ENCODE measurements at regions of chr11 and their contacts with region 1.

Region 1: DNA sequence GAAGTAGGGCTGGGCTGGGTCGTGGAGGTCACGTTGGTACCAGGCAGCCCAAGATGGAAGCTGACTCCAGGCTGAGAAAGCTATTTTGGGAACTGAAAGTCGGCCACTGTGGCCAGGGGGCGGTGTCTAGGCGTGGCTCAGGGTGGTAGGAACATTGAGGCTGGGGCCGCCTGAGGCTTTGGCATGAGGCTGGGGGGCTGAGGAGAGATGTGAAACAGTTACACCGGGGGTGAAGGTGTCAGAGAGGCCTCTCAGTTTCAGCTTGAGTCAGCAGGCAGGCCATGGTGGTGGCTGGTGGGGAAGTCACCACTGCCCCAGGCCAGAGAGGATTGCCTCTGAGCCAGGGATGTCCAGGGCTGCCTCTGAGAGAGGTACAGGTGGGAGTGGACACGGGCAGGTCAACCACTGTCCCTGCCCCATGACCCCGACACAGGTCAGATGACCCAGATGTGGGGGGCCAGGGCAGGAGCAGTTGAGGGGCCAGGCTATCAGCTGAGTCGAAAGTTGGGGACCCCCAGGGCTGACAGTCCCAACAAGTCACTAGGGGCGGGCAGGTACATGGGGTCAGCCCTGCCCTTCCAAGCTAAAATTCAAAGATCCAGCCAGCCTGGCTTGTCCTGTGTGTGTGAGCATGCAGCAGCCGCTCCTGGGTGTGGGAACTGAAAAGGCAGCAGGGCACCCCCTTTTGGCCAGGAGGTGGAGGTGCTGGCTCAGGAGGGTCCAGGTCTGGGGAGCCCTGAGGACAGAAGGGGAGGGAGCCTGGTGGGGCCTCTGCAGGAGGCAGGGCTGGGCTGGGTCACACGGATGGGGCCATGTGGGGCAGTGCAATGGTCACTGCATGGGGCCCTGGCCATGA is 7.2 kb downstream of the KCNK7 start:
- DNase-seq: peak; percentile 67
- H3K4me3 Mint-ChIP-seq: peak overlapping the region; percentile 66
- H3K27ac Mint-ChIP-seq: peak overlapping the region; percentile 94
- H3K4me1 Mint-ChIP-seq: peaks cover 31% of the 10 kb centered on the region
- H3K27me3 Mint-ChIP-seq: no peaks in the 10 kb centered on the region

Region 2: DNA sequence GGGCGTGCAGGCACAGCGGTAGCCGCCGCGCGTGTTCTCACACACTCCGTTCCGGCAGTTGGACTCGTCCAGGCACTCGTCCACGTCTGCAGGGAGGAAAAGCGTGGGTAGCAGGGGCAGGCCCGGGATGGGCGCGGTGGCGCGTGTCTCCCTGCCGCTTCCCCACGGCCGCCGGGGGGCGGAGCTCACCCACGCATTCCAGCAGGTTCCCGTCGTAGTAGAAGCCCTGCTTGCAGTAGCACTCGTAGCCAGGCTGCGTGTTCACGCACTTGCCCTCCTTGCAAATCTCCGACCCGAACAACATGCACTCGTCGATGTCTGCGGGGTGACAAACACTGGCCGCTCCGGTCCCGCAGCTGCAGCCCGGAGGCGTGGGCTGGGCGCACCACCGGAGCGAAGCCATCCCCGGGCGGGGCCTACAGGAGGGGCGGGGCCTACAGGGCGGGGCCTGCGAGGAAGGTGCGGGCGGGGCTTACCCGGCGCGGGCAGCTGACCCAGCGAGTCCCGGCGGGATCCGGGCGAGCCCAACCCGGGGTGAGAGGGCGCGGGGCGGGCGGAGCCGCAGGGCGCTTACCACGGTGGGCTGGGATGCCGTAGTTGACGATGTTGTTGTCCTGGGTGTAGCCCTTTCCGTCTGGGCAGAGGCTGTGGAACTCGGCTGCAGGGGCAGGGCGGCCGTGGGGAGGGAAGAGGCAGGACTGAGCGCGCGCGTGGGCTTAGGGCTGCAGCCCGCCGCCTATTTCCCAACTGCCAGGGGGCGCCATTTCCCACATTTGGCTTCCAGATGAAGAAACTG is 47.9 kb before region 1 on chr11:
- intact Hi-C with region 1: loop called (anchors 1 kb)
- DNase-seq: peak; percentile 86
- H3K4me3 Mint-ChIP-seq: peak overlapping the region; percentile 85
- H3K27ac Mint-ChIP-seq: peak overlapping the region; percentile 88
- H3K4me1 Mint-ChIP-seq: peaks cover 28% of the 10 kb centered on the region
- H3K27me3 Mint-ChIP-seq: no peaks in the 10 kb centered on the region

Region 3: DNA sequence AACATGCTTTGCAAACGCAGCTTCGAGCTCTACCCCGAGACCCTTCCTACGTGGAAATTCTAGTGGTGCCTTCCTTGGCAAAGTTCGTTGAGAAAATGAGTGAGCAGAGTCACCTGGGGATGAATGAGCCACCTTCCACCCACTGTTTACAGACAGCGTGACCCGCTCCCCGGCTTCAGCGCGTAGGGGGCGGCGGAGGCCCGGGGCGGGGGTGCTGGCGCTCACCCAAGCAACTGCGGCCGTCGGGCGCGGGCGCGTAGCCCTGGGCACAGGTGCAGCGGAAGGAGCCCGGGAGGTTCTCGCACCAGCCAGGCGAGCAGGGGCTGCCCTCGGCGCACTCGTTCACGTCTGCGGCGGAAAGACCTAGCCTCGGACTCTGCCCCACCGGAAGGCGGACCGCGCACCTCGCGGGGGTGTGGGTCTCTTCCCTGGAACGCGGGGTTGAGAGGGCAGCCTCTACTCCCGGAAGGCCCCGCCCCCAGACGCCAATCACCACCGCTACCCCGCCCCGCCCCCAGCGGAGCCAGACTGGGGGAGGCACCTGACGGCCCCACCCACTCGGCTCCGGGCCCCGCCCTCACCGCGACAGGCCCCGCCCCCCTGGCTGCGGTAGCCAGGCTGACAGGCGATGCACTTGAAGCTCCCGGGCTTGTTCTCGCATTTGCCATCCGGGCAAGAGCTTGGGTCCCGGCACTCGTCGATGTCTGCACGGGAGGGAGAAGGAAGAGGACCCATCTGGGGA is 42.0 kb before region 1 on chr11:
- intact Hi-C with region 1: loop called (anchors 1 kb)
- DNase-seq: peak; percentile 96
- H3K4me3 Mint-ChIP-seq: peak overlapping the region; percentile 76
- H3K27ac Mint-ChIP-seq: peak overlapping the region; percentile 79
- H3K4me1 Mint-ChIP-seq: peaks cover 44% of the 10 kb centered on the region
- H3K27me3 Mint-ChIP-seq: no peaks in the 10 kb centered on the region

Region 4: DNA sequence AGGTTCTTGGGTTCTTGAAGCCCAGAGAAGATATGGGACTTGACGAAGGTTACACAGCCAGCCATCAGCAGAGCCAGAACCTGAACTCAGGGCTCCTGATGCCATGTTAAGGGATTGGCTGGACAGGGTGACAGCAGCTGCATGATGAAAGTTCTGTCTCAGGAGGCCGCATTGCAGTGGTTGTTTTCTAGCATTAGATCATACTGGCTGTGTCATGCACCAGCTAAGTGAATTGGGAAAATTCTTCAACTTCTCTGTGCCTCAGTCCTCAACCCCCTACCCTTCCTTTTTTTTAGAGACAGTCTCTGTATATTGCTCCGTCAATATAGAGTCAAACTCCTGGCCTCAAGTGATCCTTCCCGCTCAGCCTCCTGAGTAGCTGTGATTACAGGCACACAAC is 24.8 kb before region 1 on chr11:
- intact Hi-C with region 1: no loop called
- DNase-seq: no peak
- H3K4me3 Mint-ChIP-seq: no peak overlapping the region
- H3K27ac Mint-ChIP-seq: no peak overlapping the region
- H3K4me1 Mint-ChIP-seq: peaks cover 57% of the 10 kb centered on the region
- H3K27me3 Mint-ChIP-seq: no peaks in the 10 kb centered on the region

Region 5: DNA sequence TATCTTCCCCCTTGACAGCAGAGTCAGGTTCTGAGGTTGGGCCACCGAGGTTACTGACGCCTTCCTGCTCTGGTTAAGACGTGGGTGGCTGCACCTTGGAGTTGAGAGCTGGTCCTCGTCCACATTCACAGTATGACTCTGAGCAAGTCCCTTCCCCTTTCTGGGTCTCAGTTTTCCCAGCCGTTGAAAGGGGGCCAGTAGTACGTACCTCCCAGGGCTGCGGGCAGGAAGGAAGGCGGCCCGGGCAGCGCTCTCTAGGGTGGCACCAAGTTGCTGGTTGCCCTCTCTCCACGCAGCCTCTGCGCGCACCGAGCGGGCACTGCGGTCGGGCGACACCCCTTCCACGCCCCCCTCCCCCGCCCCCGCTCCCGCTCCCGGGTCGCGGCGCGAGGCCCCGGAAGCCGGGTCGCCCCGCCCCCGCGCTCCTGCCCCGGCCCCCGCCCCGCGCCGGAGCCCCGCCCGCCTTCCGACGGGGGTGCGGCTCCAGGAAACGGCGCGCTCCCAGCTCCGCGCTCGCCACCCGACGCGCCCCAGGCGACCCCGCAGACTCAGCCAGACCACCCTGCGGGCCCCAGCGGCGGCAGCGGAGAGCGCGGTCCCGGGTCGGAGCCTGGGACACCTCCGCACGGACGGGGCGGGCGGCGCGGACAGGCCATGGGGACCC is 12.7 kb before region 1 on chr11 and contains the start of gene EHBP1L1:
- intact Hi-C with region 1: loop called (anchors 1 kb)
- DNase-seq: peak; percentile 76
- H3K4me3 Mint-ChIP-seq: peak within 1 kb of the TSS; percentile 92
- H3K27ac Mint-ChIP-seq: peak within 1 kb of the TSS; percentile 88
- H3K4me1 Mint-ChIP-seq: peaks cover 48% of the 10 kb centered on the region
- H3K27me3 Mint-ChIP-seq: no peaks in the 10 kb centered on the region
- total RNA-seq, gene EHBP1L1: 168 and 178 TPM in 2 replicates

Region 6: DNA sequence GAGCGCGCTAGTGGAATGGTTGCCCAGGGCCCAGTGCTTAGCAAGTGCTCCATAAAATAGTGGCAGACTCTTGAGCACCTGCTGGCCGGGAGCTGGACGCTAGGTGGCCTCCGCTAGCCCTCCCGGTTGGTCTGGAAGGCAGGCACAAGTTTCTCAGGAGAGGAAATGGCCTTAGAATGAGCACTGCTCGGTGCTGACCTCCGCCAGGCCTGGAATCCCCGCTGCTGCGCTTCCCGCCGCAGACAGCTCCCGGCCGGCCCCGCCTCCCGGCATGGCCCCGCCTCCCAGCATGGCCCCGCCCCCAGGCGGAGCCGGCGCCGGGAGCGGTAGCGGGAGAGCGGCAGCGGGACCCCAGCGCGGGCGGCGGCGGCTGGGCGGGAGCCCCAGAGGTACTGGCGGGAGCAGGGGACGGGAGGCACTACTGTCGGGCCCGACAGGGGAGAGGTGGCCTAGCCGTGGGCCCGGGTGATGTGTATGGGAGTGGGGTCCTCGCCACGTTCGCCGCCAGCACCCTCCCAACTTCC is 49.4 kb after region 1 on chr11 and contains the start of gene SIPA1:
- intact Hi-C with region 1: no loop called
- DNase-seq: peak; percentile 74
- H3K4me3 Mint-ChIP-seq: peak within 1 kb of the TSS; percentile 82
- H3K27ac Mint-ChIP-seq: peak within 1 kb of the TSS; percentile 83
- H3K4me1 Mint-ChIP-seq: peaks cover 40% of the 10 kb centered on the region
- H3K27me3 Mint-ChIP-seq: no peaks in the 10 kb centered on the region
- total RNA-seq, gene SIPA1: 117 and 130 TPM in 2 replicates

Region 7: DNA sequence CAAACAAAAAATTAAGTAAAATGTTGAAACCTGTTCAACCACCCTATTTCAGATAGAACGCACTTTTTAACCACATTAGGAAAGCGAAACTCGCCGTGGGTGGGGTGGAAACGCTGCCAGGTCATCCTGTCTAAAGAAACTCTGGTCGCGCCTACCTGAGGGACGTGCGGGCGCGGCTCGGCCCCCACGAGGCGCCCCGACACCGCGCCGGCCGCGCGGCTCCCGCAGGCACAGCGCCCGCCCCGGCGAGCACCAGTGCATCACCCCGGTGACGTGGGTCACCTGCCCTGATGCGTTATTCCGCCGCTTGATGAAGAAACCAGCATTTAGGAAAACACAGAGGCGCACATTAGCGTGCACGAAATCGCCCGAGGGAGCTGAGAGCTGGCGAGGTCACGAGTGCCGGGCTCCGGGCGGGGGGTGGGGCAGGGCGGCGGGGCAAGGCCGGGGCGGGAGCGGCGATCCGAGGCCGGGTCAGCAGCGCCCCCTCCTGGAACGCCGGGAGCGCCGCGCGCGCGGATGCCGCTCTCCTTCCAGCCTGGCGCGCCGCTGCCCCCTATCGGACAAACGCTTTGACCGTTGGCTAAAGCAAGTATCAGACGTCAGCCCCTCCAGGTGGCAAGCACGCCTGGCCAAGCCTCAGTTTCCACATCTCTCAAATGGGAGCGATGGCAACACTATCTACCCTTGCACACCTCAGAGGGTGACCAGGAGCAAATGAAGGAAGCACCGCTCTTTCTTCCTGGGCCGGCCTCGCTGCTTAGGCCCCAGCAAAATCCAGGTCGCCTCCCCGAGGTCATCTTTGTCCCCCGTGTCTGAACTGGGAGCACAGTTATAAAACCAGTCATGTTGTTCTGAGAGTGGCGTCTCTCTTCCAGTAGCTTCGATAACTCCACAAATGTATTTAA is 229.7 kb after region 1 on chr11:
- intact Hi-C with region 1: no loop called
- DNase-seq: peak; percentile 90
- H3K4me3 Mint-ChIP-seq: peak overlapping the region; percentile 82
- H3K27ac Mint-ChIP-seq: peak overlapping the region; percentile 82
- H3K4me1 Mint-ChIP-seq: peaks cover 19% of the 10 kb centered on the region
- H3K27me3 Mint-ChIP-seq: peaks cover 9% of the 10 kb centered on the region

Region 8: DNA sequence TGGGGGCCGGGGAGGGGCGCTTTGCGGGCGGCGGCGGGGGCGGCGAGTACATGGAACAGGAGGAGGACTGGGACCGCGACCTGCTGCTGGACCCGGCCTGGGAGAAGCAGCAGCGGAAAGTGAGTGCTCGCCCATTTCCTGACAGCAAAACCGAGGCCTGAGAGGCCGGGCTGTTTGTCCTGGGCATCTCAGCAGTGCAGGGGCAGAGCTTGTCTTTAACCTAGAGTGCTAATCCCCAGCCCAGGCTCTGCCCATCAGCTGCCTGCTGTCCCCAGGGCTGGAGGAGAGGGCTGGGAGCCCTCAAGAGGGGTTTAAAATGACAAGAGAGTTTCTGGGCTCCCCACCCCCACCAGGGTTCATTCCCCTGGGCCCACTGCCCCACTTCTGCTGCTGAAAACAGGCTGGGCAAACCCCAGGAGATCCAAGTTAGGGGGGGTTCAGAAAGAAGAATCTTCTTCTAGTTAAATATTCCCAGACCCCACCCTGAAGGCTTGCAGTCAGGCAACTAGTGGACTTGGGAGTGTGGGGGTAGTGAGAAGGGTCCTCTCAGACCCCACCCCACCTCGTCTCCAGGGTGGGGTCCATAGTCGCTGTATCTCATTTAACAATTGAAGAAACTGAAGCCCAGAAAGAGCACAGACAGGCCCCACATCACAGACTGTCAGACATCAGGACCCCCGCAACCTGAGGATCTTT is 958.7 kb after region 1 on chr11:
- intact Hi-C with region 1: no loop called
- DNase-seq: no peak
- H3K4me3 Mint-ChIP-seq: no peak overlapping the region
- H3K27ac Mint-ChIP-seq: no peak overlapping the region
- H3K4me1 Mint-ChIP-seq: peaks cover 23% of the 10 kb centered on the region
- H3K27me3 Mint-ChIP-seq: peaks cover 10% of the 10 kb centered on the region

Measured in activated T-helper 1 cell treated with anti-CD3 and anti-CD28 coated beads, Interleukin-12 subunit alpha, Interleukin-12 subunit beta, Interleukin-2, Interleukin-4 antibody, amounts not matched to agents 30 ng/mL and 10 ng/mL and 1 ng/mL, durations not matched to agents 14 hours and 24 hours and 36 hours (primary cell).